ENCODE measurements at regions of chr3 and their contacts with region 1.

Region 1: GRCh38 chr3:16264708-16265454 is at the starts of genes DPH3 and OXNAD1:
- DNase-seq: peak; percentile 99
- H3K4me3 Mint-ChIP-seq: peak within 1 kb of the TSS; percentile 96
- H3K27ac Mint-ChIP-seq: peak within 1 kb of the TSS; percentile 93
- H3K4me1 Mint-ChIP-seq: peaks cover 42% of the 10 kb centered on the region
- H3K27me3 Mint-ChIP-seq: no peaks in the 10 kb centered on the region
- total RNA-seq, gene DPH3: 16.7 to 19.8 TPM
- total RNA-seq, gene OXNAD1: 26.9 to 27.1 TPM

Region 2: GRCh38 chr3:16253601-16254000 is 11.3 kb before region 1 on chr3:
- CTCF ChIA-PET with region 1: interaction called, 12 read pairs
- POLR2A ChIA-PET with region 1: interaction called, 17 read pairs
- DNase-seq: no peak
- H3K4me3 Mint-ChIP-seq: no peak overlapping the region
- H3K27ac Mint-ChIP-seq: no peak overlapping the region
- H3K4me1 Mint-ChIP-seq: peaks cover 37% of the 10 kb centered on the region
- H3K27me3 Mint-ChIP-seq: no peaks in the 10 kb centered on the region

Region 3: GRCh38 chr3:16290007-16290826 is 25.3 kb after region 1 on chr3:
- CTCF ChIA-PET with region 1: interaction called, 75 read pairs
- POLR2A ChIA-PET with region 1: interaction called, 26 read pairs
- DNase-seq: peak; percentile 69
- H3K4me3 Mint-ChIP-seq: peak overlapping the region; percentile 81
- H3K27ac Mint-ChIP-seq: peak overlapping the region; percentile 92
- H3K4me1 Mint-ChIP-seq: peaks cover 83% of the 10 kb centered on the region
- H3K27me3 Mint-ChIP-seq: no peaks in the 10 kb centered on the region

Region 4: DNA sequence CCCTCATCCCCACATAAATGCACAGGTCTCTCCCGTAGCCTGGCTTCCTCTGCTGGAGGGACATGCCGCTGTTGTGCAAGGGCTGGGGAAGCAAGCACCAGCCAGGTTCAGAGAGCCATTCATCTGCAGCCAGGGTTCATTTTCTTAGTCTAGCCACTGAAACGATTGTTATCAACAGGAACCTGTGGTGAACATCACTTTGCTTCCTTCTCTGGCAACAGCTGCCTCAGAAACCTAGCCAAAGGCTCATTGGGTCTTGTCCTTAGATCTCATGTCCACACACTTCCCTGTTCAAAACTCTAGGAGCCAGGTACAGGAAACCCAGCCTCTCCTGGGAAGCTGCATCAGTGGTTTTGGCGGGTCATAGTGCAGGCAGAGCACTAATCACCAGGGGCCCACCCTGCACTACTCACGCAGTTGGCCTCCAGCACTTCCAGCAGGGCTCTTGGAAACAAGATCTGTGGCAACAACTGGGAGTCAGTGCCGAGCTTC is 47.1 kb after region 1 on chr3:
- CTCF ChIA-PET with region 1: interaction called, 30 read pairs
- POLR2A ChIA-PET with region 1: interaction called, 5 read pairs
- DNase-seq: peak; percentile 71
- H3K4me3 Mint-ChIP-seq: peak overlapping the region; percentile 54
- H3K27ac Mint-ChIP-seq: peak overlapping the region; percentile 87
- H3K4me1 Mint-ChIP-seq: peaks cover 87% of the 10 kb centered on the region
- H3K27me3 Mint-ChIP-seq: no peaks in the 10 kb centered on the region

Region 5: GRCh38 chr3:16366581-16366980 is 101.7 kb after region 1 on chr3:
- CTCF ChIA-PET with region 1: interaction called, 10 read pairs
- POLR2A ChIA-PET with region 1: no interaction called
- DNase-seq: no peak
- H3K4me3 Mint-ChIP-seq: no peak overlapping the region
- H3K27ac Mint-ChIP-seq: no peak overlapping the region
- H3K4me1 Mint-ChIP-seq: peaks cover 20% of the 10 kb centered on the region
- H3K27me3 Mint-ChIP-seq: no peaks in the 10 kb centered on the region

Region 6: GRCh38 chr3:16550676-16551341 is 285.9 kb after region 1 on chr3:
- CTCF ChIA-PET with region 1: interaction called, 37 read pairs
- POLR2A ChIA-PET with region 1: interaction called, 5 read pairs
- DNase-seq: peak; percentile 78
- H3K4me3 Mint-ChIP-seq: no peak overlapping the region
- H3K27ac Mint-ChIP-seq: peak overlapping the region; percentile 12
- H3K4me1 Mint-ChIP-seq: peaks cover 8% of the 10 kb centered on the region
- H3K27me3 Mint-ChIP-seq: peaks cover 17% of the 10 kb centered on the region

Region 7: GRCh38 chr3:16768959-16769358 is 504.1 kb after region 1 on chr3:
- CTCF ChIA-PET with region 1: no interaction called
- POLR2A ChIA-PET with region 1: no interaction called
- DNase-seq: no peak
- H3K4me3 Mint-ChIP-seq: no peak overlapping the region
- H3K27ac Mint-ChIP-seq: no peak overlapping the region
- H3K4me1 Mint-ChIP-seq: no peaks in the 10 kb centered on the region
- H3K27me3 Mint-ChIP-seq: peaks cover 2% of the 10 kb centered on the region

Measured in activated CD4-positive, alpha-beta memory T cell treated with anti-CD3 and anti-CD28 coated beads, Interleukin-2, amount 10 ng/mL, durations not matched to agents 7 days and 5 days (primary cell).